Left cardiac atrium (tissue), 4 donors: ENCODE measurements at regions of chr15 and their contacts with region 1.

Region 1: DNA sequence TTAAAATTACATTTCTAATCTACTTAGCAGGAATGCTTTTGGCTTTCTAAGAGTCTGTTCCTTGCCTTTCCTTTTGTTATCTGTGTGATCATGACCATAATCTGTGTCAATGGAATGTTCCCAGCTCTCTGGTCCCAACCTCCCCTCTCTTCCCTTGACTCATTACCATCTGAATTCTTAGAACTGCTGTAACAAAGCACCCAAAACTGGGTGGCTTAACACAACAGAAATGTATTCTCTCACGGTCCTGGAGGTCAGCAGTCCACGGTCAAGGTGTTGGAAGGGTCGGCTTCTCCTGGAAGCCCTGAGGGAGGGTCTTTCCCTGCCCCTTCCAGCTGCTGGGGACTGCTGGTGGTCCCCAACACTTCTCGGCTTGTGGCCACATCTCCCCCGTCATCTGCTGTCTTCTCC is 81.1 kb downstream of the LRRK1 start:
- DNase-seq: no peak
- ATAC-seq: no peak

Region 2: DNA sequence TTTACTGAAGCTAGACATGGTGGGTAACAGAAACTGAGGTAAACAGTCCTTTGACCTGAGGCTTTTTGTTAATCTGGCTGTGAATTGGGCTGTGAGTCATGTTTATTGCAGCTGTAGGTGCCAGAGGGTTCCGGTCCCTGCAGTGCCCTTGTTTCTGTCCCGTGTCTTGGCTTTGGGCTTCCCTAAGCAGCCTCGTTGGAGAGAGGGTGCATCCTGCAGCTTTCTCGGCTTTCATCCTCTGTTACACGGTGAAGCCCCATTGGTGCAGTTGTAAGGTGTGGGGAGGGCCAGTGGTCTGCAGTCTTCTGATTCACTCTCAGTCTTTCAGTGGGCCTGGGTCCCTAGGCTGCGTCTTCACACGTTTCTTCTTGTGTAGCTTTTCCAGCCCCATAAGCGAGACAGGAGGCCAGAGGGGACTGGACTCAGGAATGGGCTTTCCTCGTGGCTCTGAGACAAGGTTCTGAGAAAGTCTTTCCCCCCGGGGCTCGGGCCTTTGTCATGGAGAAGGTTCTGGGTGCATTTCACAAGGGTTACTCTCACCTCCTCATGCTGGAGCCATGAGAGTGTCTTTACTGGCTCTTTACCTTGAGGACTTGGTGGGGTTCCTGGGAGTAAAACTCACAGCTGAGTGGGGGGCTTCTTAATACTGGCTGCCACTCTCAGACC is 364.7 kb before region 1 on chr15:
- intact Hi-C with region 1: loop called in 1 of 2 experiments (anchors 5 kb)
- DNase-seq: no peak
- ATAC-seq: no peak

Region 3: DNA sequence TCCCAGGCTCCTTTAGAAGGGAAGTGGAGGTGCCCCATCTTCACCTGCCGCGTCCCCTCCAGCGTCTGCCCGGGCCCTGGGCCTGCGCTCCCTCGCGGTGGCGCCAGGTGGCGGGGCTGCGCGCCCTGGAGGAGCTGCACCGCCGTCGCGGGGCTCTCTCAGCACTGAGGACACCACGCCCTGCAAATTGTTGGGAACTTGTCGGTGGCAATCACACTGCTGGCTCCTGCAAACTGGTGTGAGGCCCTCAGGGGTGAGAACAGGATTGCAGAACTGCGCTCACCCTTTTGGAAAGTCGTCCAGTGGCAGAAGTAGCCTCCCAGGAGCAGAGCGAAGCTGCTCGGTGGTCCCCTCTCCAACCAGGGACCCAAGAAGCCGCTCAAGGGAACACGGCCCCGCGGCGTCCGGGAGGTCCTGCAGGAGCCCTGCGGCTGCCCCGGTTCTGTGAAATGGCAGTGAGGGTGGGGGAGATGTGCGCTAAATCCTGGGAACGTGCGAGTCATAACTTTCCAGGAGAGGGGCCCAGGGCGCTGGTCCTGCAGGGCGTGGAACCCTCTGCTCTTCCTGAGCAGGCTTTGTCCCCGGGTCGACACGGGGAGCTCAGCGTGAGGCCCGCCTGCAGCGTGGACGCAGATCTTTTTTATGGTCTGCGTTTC is 82.1 kb before region 1 on chr15:
- intact Hi-C with region 1: loop called in 1 of 2 experiments (anchors 5 kb)
- DNase-seq: peak; percentile 85
- ATAC-seq: peak; percentile 89 to 93

Region 4: DNA sequence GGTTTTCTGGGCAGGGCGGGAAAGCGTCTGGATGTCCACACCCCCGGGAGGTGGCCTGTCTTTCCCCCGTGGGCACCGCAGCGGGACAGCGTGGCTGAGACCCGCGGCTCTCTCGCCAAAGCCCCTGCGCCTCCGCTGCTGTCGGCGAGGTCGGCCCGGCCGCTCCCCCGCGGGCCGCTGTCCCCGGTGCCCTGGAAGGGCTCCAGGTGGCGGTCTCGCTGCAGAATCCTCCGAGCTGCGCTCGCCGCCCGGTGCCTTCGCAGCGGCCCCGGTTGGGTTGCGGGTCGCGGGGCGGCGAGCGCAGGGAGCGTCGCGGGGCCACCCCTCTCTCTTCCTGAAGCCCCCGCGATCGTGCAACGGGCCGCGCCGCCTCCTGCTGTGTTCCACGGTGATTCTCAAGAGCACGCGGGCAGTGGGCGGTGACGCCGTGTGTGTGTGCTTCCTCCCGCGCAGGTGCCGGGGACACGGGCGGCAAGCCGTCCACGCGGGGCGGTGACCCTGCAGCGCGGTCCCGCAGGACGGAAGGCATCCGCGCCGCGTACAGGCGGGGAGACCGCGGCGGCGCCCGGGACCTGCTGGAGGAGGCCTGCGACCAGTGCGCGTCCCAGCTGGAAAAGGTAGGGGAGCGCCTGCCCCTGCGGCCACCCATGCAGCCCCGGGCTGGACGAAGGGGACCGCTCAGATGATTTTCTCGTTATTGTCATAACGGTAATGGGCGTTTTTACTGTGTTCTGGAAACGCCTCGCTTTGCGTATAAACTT is 26.7 kb before region 1 on chr15:
- intact Hi-C with region 1: no loop called
- DNase-seq: no peak
- ATAC-seq: peak in 1 of 2 donors; percentile 33